ENCODE measurements at regions of chr1 and their contacts with region 1.

Region 1: GRCh38 chr1:102201591-102201990 is 204.9 kb upstream of the OLFM3 start:
- DNase-seq: no peak
- ATAC-seq: no peak
- H3K4me3 ChIP-seq: no peak overlapping the region
- H3K27ac ChIP-seq: no peak overlapping the region
- H3K4me1 ChIP-seq: no peaks in the 10 kb centered on the region
- H3K27me3 ChIP-seq: no peaks in the 10 kb centered on the region
- CTCF ChIP-seq: no peak
- POLR2A ChIP-seq: no peak

Region 2: GRCh38 chr1:101816262-101816661 is 385.3 kb before region 1 on chr1:
- intact Hi-C with region 1: loop called (anchors 10 kb)
- DNase-seq: no peak
- ATAC-seq: no peak
- H3K4me3 ChIP-seq: no peak overlapping the region
- H3K27ac ChIP-seq: no peak overlapping the region
- H3K4me1 ChIP-seq: no peaks in the 10 kb centered on the region
- H3K27me3 ChIP-seq: no peaks in the 10 kb centered on the region
- CTCF ChIP-seq: no peak
- POLR2A ChIP-seq: no peak

Region 3: DNA sequence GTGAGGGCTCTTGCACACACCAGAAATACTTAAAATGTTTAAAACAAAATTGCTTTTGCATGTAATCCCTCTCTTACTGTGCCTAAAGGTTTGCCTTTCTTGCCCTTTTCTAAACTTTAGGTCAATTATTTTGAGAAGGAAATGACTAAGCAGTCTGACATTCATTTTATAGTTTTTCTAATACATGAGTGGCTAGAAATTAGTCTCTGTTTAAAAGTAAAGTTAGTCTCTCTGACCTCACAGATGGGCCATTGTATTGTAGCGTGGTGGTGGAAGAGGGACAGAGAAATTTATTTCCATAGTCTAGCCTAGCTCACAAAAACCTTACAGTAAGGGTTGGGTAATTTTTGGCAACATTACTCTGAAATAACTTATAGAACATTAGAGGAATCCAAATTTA is 910.3 kb after region 1 on chr1:
- intact Hi-C with region 1: no loop called
- DNase-seq: no peak
- ATAC-seq: no peak
- H3K4me3 ChIP-seq: no peak overlapping the region
- H3K27ac ChIP-seq: no peak overlapping the region
- H3K4me1 ChIP-seq: peaks cover 19% of the 10 kb centered on the region
- H3K27me3 ChIP-seq: no peaks in the 10 kb centered on the region
- CTCF ChIP-seq: no peak
- POLR2A ChIP-seq: no peak